Activated T-helper 1 cell treated with anti-CD3 and anti-CD28 coated beads, Interleukin-12 subunit alpha, Interleukin-12 subunit beta, Interleukin-2, Interleukin-4 antibody, amounts not matched to agents 30 ng/mL and 10 ng/mL and 1 ng/mL, durations not matched to agents 14 hours and 24 hours and 36 hours (primary cell): ENCODE measurements at regions of chr4 and their contacts with region 1.

Region 1: GRCh38 chr4:94595879-94596483 is 144.2 kb downstream of the PDLIM5 start:
- DNase-seq: no peak
- H3K4me3 Mint-ChIP-seq: no peak overlapping the region
- H3K27ac Mint-ChIP-seq: no peak overlapping the region
- H3K4me1 Mint-ChIP-seq: no peaks in the 10 kb centered on the region
- H3K27me3 Mint-ChIP-seq: no peaks in the 10 kb centered on the region

Region 2: GRCh38 chr4:93870876-93871458 is 725.0 kb before region 1 on chr4:
- intact Hi-C with region 1: no loop called
- DNase-seq: no peak
- H3K4me3 Mint-ChIP-seq: no peak overlapping the region
- H3K27ac Mint-ChIP-seq: no peak overlapping the region
- H3K4me1 Mint-ChIP-seq: no peaks in the 10 kb centered on the region
- H3K27me3 Mint-ChIP-seq: no peaks in the 10 kb centered on the region

Region 3: DNA sequence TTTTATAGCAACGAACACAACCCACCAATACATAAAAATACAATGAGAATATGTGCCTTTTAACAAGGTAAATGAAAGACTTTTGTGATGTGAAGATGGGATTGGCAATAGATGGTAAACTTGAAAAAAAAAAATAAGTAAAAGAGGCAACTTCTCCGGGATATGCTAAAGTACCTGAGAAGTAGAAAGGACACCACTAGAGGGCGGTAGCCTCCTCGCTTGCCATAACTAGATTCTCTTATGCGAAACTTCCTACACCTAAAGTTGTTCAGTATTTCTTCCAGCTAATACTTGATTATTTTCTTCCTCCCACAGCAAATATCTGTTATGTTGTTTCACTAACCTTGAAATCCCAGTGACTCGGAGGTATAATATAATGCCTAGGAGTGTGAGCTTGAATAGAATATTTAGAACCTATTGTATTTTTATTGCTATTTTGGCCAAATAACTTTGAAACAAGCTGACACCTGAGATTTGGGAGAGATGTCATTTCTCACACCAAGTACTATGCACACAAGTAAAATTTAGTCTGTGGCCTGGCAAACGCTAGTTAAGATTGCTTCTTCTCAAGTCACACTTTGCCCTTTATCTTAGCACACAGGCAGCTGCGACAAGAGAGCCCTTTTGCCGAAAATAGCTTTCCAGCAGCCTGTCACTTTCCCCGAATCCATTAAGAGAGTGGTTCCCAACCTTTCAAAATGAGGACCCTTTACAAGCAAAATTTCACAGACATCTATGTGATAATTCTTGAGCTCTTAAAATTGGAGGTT is 189.1 kb before region 1 on chr4:
- intact Hi-C with region 1: loop called (anchors 1 kb)
- DNase-seq: peak; percentile 15
- H3K4me3 Mint-ChIP-seq: no peak overlapping the region
- H3K27ac Mint-ChIP-seq: no peak overlapping the region
- H3K4me1 Mint-ChIP-seq: no peaks in the 10 kb centered on the region
- H3K27me3 Mint-ChIP-seq: peaks cover 5% of the 10 kb centered on the region

Region 4: GRCh38 chr4:94621491-94622080 is 25.6 kb after region 1 on chr4:
- intact Hi-C with region 1: no loop called
- DNase-seq: no peak
- H3K4me3 Mint-ChIP-seq: no peak overlapping the region
- H3K27ac Mint-ChIP-seq: no peak overlapping the region
- H3K4me1 Mint-ChIP-seq: no peaks in the 10 kb centered on the region
- H3K27me3 Mint-ChIP-seq: no peaks in the 10 kb centered on the region